Activated CD8-positive, alpha-beta T cell treated with anti-CD3 and anti-CD28 coated beads, Interleukin-2, amount 10 ng/mL, durations not matched to agents 7 days and 5 days (primary cell): ENCODE measurements at regions of chr4 and their contacts with region 1.

Region 1: DNA sequence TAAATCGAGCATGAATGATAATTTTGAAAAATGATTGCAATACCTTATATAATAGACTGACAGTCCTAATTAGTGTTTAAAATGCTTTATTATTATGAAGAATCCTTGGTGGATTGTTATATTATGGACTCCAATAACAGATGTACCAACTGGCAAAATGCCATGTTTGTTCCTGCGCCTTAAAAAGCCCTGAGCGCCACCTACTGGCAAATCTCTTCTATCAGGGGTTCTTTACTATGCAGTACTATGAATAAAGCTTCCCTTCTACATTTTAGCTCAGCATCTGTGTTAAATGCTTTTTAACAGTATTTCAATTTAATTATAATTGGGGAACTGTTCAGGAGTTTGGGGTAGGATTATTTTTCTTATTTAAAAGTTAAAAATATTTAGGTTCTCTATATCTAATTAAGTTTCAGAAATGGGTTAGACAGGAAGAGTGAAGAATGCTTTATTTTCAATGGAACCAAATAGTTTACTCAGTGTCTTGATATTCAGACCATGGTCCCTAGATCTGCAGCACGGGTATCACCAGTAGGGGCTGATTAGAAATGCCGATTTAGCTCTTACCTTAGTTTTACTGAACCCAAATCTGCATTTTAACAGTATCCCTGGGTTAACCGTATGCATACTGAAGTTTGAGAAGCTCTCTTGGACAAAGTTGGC is 20.1 kb downstream of the CFAP97 start:
- DNase-seq: peak; percentile 86
- ATAC-seq: peak; percentile 86
- H3K4me3 Mint-ChIP-seq: no peak overlapping the region
- H3K27ac Mint-ChIP-seq: no peak overlapping the region
- H3K4me1 Mint-ChIP-seq: peaks cover 9% of the 10 kb centered on the region
- H3K27me3 Mint-ChIP-seq: no peaks in the 10 kb centered on the region

Region 2: DNA sequence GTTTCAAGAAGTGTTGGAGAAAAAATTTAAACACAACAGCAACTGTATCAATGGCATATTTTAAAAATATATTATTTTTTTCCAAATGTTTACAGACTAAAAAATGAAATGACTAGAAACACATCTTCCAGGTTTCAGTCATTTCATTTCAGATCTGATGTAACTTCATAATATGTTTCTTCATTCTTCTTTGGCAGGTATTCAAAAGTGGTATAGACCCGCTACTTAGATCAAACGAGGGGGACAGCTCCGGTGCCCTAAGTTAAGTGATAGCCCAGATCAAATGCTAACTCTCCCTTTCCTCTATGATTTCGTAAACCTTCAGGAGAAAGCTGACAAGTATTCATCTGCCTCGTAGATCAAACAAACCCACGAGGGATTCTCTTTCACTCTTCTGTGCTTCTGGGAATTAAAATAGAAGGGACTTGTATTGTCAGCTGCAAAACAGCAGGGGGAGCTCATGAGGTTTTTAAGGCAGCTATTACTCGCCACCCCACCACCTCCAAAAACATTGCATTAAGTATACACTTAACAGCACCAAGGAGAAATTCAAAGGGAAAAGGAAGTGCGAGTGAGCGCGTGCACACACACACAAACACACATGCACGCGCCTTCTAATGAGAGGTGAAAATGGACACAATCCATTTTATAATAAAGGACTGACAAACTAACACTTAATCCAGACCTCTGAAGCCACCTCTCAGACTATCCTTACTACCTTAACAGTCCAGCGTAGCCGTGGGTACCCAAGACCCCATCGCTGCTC is 144.1 kb before region 1 on chr4:
- CTCF ChIA-PET with region 1: interaction called, 44 read pairs
- POLR2A ChIA-PET with region 1: no interaction called
- DNase-seq: peak; percentile 63
- ATAC-seq: peak; percentile 77
- H3K4me3 Mint-ChIP-seq: peak overlapping the region; percentile 3
- H3K27ac Mint-ChIP-seq: no peak overlapping the region
- H3K4me1 Mint-ChIP-seq: peaks cover 7% of the 10 kb centered on the region
- H3K27me3 Mint-ChIP-seq: peaks cover 20% of the 10 kb centered on the region

Region 3: DNA sequence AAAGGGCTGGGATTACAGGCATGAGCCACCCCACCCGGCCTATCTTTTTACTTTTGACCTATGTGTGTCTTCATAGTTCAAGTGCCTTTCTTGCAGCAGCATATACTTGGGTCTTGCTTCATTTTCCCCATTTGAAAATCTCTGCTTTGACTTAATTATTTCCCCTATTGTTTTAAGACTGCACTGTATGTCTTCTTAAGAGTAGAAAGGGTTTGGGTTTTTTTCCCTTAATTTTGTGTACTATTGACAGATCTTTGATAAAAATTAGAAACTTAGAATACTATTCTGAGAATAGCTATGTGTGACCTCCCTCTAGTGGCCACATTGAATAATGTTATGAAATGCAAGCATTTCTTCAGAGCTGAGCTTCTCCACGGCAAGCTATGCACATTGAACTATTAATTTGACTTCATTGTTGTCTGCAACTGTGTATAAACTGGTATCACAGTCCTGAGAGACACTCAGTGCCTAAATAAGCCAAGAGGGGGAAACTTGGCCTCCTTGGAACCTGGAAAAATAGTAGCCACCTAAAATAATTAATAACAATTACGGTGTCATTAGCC is 49.4 kb before region 1 on chr4:
- CTCF ChIA-PET with region 1: interaction called, 18 read pairs
- POLR2A ChIA-PET with region 1: no interaction called
- DNase-seq: peak; percentile 35
- ATAC-seq: peak; percentile 73
- H3K4me3 Mint-ChIP-seq: no peak overlapping the region
- H3K27ac Mint-ChIP-seq: no peak overlapping the region
- H3K4me1 Mint-ChIP-seq: no peaks in the 10 kb centered on the region
- H3K27me3 Mint-ChIP-seq: peaks cover 23% of the 10 kb centered on the region

Region 4: GRCh38 chr4:185165605-185166063 is 18.1 kb before region 1 on chr4:
- CTCF ChIA-PET with region 1: interaction called, 28 read pairs
- POLR2A ChIA-PET with region 1: no interaction called
- DNase-seq: peak; percentile 31
- ATAC-seq: peak; percentile 87
- H3K4me3 Mint-ChIP-seq: no peak overlapping the region
- H3K27ac Mint-ChIP-seq: no peak overlapping the region
- H3K4me1 Mint-ChIP-seq: peaks cover 15% of the 10 kb centered on the region
- H3K27me3 Mint-ChIP-seq: peaks cover 2% of the 10 kb centered on the region

Region 5: GRCh38 chr4:185196437-185196836 is 12.7 kb after region 1 on chr4:
- CTCF ChIA-PET with region 1: interaction called, 19 read pairs
- POLR2A ChIA-PET with region 1: interaction called, 3 read pairs
- DNase-seq: no peak
- ATAC-seq: no peak
- H3K4me3 Mint-ChIP-seq: no peak overlapping the region
- H3K27ac Mint-ChIP-seq: no peak overlapping the region
- H3K4me1 Mint-ChIP-seq: peaks cover 9% of the 10 kb centered on the region
- H3K27me3 Mint-ChIP-seq: no peaks in the 10 kb centered on the region

Region 6: GRCh38 chr4:185209031-185209851 is 25.5 kb after region 1 on chr4 and contains the start of gene SNX25:
- CTCF ChIA-PET with region 1: interaction called, 18 read pairs
- POLR2A ChIA-PET with region 1: no interaction called
- DNase-seq: peak; percentile 87
- ATAC-seq: peak; percentile 93
- H3K4me3 Mint-ChIP-seq: peak within 1 kb of the TSS; percentile 87
- H3K27ac Mint-ChIP-seq: peak within 1 kb of the TSS; percentile 84
- H3K4me1 Mint-ChIP-seq: peaks cover 35% of the 10 kb centered on the region
- H3K27me3 Mint-ChIP-seq: peaks cover 2% of the 10 kb centered on the region
- total RNA-seq, gene SNX25: 16.6 to 16.7 TPM